ENCODE measurements at regions of chr20 and their contacts with region 1.

Region 1: DNA sequence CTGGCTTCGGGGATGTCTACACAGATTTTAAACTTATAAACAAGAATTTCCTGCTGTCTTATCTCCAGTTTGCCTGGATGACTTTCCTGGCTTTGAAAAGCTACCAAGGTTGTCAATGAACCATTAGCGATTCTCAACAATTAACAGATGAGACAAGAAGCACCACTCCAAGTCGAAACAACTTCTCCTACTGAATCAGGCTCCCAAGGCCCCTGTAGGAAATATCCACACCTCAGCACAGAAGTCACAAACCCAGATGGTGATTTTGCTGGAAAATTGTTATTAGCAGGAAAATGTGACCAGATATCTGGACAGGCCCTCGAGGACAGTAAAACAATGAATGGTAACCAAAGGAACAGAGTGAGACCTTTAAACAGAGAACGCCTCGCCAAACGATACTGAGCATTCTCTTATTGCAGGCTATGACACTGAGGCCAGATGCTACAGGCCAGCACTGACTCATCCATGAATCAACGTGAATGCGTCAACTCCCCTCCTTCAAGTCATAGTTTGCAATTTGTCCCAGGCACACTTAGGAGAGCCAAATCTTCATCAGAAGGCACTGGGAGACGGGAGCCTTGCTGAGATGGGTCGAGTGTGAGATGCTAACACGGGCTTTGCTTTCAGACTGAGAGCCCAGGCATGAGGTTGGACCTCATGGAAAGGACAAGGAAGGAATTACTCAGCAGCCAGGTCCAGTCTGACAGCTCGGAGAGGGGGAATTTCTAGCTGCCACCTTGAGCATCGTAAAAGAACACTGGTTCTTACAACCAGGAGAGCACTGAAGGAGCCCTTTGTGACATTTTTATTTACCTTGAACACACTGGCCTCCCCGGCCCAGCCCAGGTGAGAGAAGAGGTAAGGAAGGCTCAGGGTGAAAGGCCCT is 60.8 kb downstream of the BMP7 start:
- DNase-seq: peak; percentile 97
- H3K4me3 ChIP-seq: no peak overlapping the region
- H3K27ac ChIP-seq: no peak overlapping the region
- H3K4me1 ChIP-seq: peaks cover 11% of the 10 kb centered on the region
- H3K27me3 ChIP-seq: peaks cover 3% of the 10 kb centered on the region
- CTCF ChIP-seq: no peak

Region 2: GRCh38 chr20:57195469-57196100 is 10.0 kb before region 1 on chr20:
- CTCF ChIA-PET with region 1: no interaction called
- dilution Hi-C with region 1: no loop called
- in situ Hi-C with region 1: no loop called
- intact Hi-C with region 1: loop called (anchors 1 kb)
- DNase-seq: peak; percentile 91
- H3K4me3 ChIP-seq: no peak overlapping the region
- H3K27ac ChIP-seq: no peak overlapping the region
- H3K4me1 ChIP-seq: peaks cover 17% of the 10 kb centered on the region
- H3K27me3 ChIP-seq: no peaks in the 10 kb centered on the region
- CTCF ChIP-seq: no peak

Measured in mammary epithelial cell (primary cell).